CD14-positive monocyte (primary cell): ENCODE measurements at regions of chr3 and their contacts with region 1.

Region 1: GRCh38 chr3:128725932-128726690 is at the start of gene RAB7A:
- DNase-seq: peak; percentile 97 to 99 (median 99)
- H3K4me3 ChIP-seq: peak within 1 kb of the TSS; percentile 79 to 95 (median 95)
- H3K4me3 Mint-ChIP-seq: peak within 1 kb of the TSS; percentile 89 to 98
- H3K27ac ChIP-seq: peak within 1 kb of the TSS; percentile 86 to 99
- H3K27ac Mint-ChIP-seq: peak within 1 kb of the TSS; percentile 91 to 98 (median 96)
- H3K4me1 ChIP-seq: peaks cover 38 to 49% of the 10 kb centered on the region in 2 donors
- H3K4me1 Mint-ChIP-seq: peaks cover 51% of the 10 kb centered on the region
- H3K27me3 ChIP-seq: no peaks in the 10 kb centered on the region
- H3K27me3 Mint-ChIP-seq: peaks cover 3 to 7% (median 3%) of the 10 kb centered on the region in 3 donors
- CTCF ChIP-seq: no peak
- polyA plus RNA-seq, gene RAB7A: 192 to 261 (median 223) TPM

Region 2: DNA sequence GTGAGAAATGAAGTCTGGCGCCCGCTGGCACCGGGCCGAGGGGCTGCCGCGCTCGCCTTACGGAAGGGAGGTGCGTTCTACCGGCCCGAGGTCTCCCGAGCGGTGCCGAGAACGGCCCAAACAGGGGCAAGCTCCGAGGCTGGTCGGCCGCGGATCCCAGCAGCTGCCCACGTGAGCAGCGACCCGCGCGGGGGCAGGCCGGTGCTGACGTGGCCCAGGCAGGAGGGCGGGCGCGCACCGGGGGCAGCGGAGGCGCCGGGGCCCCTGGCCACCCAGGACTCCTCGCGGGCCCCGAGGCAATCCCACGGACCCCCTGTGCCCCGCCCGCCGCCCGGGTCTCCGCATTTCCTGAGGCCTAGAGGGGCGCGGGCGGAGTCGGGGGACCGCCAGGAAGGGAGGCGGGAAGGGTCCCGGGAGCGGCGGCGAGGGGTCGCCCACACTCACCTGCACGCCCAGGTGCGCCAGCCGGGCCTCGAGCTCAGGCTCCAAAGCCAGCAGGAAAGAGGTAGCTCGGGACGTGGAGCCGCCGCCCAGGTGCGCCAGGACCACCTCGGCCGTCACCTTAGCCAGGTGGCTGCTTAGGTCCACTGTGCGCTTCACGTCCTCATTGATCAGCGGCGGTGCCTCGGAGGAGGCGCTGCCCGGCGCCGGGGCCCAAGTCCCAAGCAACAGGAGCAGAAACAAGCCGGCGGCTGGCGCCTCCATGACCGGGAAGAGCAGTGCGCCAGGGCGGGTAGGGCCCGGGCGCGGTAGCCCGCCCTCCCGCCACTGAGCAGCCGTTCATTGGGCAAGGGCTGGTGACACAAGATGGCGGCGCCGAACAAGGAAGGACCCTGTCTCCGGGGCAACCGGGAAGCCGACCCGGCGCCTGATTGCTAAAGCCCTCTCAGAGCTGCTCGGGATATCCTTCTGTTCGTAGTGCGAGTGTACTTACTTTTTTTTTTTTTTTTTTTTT is 75.7 kb before region 1 on chr3 and contains the start of gene RPN1:
- intact Hi-C with region 1: loop called in 1 of 2 experiments (anchors 10 kb)
- DNase-seq: peak; percentile 96 to 97 (median 96)
- H3K4me3 ChIP-seq: peak within 1 kb of the TSS; percentile 84 to 98 (median 98)
- H3K4me3 Mint-ChIP-seq: peak within 1 kb of the TSS; percentile 84 to 90
- H3K27ac ChIP-seq: peak within 1 kb of the TSS; percentile 94 to 96
- H3K27ac Mint-ChIP-seq: peak within 1 kb of the TSS; percentile 94 to 99 (median 97)
- H3K4me1 ChIP-seq: peaks cover 28 to 49% of the 10 kb centered on the region in 2 donors
- H3K4me1 Mint-ChIP-seq: peaks cover 49% of the 10 kb centered on the region
- H3K27me3 ChIP-seq: no peaks in the 10 kb centered on the region
- H3K27me3 Mint-ChIP-seq: peaks cover 0 to 2% (median 0%) of the 10 kb centered on the region in 3 donors
- CTCF ChIP-seq: no peak
- polyA plus RNA-seq, gene RPN1: 112 to 375 (median 354) TPM

Region 3: DNA sequence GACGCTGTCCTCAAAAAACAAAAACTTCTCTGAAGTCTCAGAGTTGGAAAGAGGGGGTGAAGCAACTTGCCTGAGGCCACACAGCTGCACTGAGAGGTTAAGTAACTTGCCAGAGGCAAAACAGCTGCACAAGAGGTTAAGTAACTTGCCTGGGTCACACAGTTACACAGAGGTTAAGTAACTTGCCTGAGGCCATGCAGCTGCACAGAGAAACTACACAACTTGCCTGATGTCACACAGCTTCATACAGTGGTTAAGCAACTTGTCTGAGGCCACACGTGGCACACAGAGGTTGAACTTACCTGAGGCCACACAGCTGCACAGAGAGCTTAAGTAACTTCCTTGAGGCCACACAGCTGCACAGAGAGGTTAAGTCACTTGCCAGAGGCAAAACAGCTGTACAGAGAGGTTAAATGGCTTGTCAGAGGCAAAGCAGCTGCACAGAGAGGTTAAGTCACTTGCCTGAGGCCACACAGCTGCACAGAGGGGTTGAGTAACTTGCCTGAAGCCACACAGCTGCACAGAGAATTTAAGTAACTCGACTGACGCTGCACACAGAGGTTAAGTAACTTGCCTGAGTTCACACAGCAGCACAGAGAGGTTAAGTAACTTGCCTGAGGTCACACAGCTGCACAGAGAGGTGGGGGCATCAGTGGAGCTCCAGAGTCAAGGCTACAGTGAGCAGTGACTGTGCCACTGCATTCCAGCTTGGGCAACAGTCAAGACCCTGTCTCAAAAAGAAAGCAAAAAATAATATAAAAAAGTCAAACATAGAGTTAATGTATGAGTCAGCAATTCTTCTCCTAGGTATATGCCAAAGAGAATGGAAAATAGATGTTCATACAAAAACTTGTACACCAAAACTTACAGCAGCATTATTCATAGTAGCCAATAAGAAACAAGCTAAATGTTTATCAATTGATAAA is 141.4 kb after region 1 on chr3:
- intact Hi-C with region 1: no loop called
- DNase-seq: no peak
- H3K4me3 ChIP-seq: no peak overlapping the region
- H3K4me3 Mint-ChIP-seq: no peak overlapping the region
- H3K27ac ChIP-seq: peak overlapping the region in 1 of 2 donors; percentile 43
- H3K27ac Mint-ChIP-seq: peak overlapping the region in 4 of 7 donors; percentile 33 to 59 (median 50)
- H3K4me1 ChIP-seq: peaks cover 33 to 34% of the 10 kb centered on the region in 2 donors
- H3K4me1 Mint-ChIP-seq: peaks cover 41% of the 10 kb centered on the region
- H3K27me3 ChIP-seq: no peaks in the 10 kb centered on the region
- H3K27me3 Mint-ChIP-seq: peaks cover 0 to 4% (median 0%) of the 10 kb centered on the region in 3 donors
- CTCF ChIP-seq: no peak